CD4-positive, alpha-beta T cell (primary cell): ENCODE measurements at regions of chr1 and their contacts with region 1.

Region 1: GRCh38 chr1:53945433-53946251 is at the start of gene IFT25:
- DNase-seq: peak; percentile 96 to 100 (median 98)
- ATAC-seq: peak; percentile 77
- H3K4me3 ChIP-seq: peak within 1 kb of the TSS; percentile 89
- H3K4me3 Mint-ChIP-seq: peak within 1 kb of the TSS; percentile 99
- H3K27ac ChIP-seq: peak within 1 kb of the TSS; percentile 60 to 80
- H3K27ac Mint-ChIP-seq: peak within 1 kb of the TSS; percentile 91
- H3K4me1 ChIP-seq: peaks cover 28% of the 10 kb centered on the region
- H3K4me1 Mint-ChIP-seq: peaks cover 59% of the 10 kb centered on the region
- H3K27me3 ChIP-seq: no peaks in the 10 kb centered on the region
- H3K27me3 Mint-ChIP-seq: no peaks in the 10 kb centered on the region
- CTCF ChIP-seq: no peak
- total RNA-seq, gene IFT25: 12.7 to 13.9 TPM

Region 2: GRCh38 chr1:52056163-52056936 is 1889.3 kb before region 1 on chr1 and contains the start of gene BTF3L4:
- CTCF ChIA-PET with region 1: no interaction called
- POLR2A ChIA-PET with region 1: interaction called, 3 read pairs
- intact Hi-C with region 1: loop called in 1 of 2 experiments (anchors 10 kb)
- DNase-seq: peak; percentile 85 to 95 (median 90)
- ATAC-seq: peak; percentile 96
- H3K4me3 ChIP-seq: peak within 1 kb of the TSS; percentile 88
- H3K4me3 Mint-ChIP-seq: peak within 1 kb of the TSS; percentile 97
- H3K27ac ChIP-seq: peak within 1 kb of the TSS; percentile 83 to 84
- H3K27ac Mint-ChIP-seq: peak within 1 kb of the TSS; percentile 92
- H3K4me1 ChIP-seq: peaks cover 26% of the 10 kb centered on the region
- H3K4me1 Mint-ChIP-seq: peaks cover 71% of the 10 kb centered on the region
- H3K27me3 ChIP-seq: no peaks in the 10 kb centered on the region
- H3K27me3 Mint-ChIP-seq: no peaks in the 10 kb centered on the region
- CTCF ChIP-seq: no peak
- total RNA-seq, gene BTF3L4: 29.4 to 34.1 TPM

Region 3: DNA sequence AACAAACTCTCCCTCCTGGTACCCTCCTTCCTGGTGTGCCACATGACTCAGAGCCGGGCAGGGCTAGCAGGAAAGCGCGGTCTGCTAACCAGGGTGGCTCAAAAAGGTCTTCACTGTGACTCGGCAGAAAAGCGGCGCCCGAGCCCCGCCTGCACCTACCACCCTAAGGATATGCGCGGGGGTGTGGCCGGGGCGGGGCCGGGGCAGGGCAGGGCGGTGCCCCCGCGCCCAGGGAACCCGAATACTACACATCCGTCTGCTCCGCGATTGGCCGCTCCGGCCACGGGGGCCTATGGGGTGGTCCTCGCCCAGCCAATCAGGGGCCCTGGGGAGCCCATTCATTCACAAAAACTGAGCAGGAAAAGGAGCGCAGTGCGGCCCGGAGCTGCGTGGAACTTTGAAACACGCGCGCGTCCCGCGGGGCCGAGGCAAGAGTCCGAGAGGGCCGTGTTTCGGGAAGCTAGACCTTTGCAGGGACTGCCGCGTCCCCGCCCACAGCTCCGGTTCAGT is 619.5 kb before region 1 on chr1:
- CTCF ChIA-PET with region 1: no interaction called
- POLR2A ChIA-PET with region 1: no interaction called
- intact Hi-C with region 1: loop called in 1 of 2 experiments (anchors 5 kb)
- DNase-seq: peak; percentile 69 to 94 (median 87)
- ATAC-seq: peak; percentile 78
- H3K4me3 ChIP-seq: peak overlapping the region; percentile 86
- H3K4me3 Mint-ChIP-seq: peak overlapping the region; percentile 83
- H3K27ac ChIP-seq: peak overlapping the region in 1 of 2 donors; percentile 65
- H3K27ac Mint-ChIP-seq: peak overlapping the region; percentile 79
- H3K4me1 ChIP-seq: peaks cover 26% of the 10 kb centered on the region
- H3K4me1 Mint-ChIP-seq: peaks cover 17% of the 10 kb centered on the region
- H3K27me3 ChIP-seq: no peaks in the 10 kb centered on the region
- H3K27me3 Mint-ChIP-seq: no peaks in the 10 kb centered on the region
- CTCF ChIP-seq: no peak

Region 4: GRCh38 chr1:53837924-53838652 is 107.6 kb before region 1 on chr1 and contains the start of gene NDC1:
- CTCF ChIA-PET with region 1: interaction called, 4 read pairs
- POLR2A ChIA-PET with region 1: interaction called, 27 read pairs
- intact Hi-C with region 1: loop called (anchors 1 kb)
- DNase-seq: peak; percentile 79 to 96 (median 86)
- ATAC-seq: peak; percentile 89
- H3K4me3 ChIP-seq: peak within 1 kb of the TSS; percentile 73
- H3K4me3 Mint-ChIP-seq: peak within 1 kb of the TSS; percentile 95
- H3K27ac ChIP-seq: peak within 1 kb of the TSS; percentile 95 to 98
- H3K27ac Mint-ChIP-seq: peak within 1 kb of the TSS; percentile 95
- H3K4me1 ChIP-seq: peaks cover 13% of the 10 kb centered on the region
- H3K4me1 Mint-ChIP-seq: peaks cover 37% of the 10 kb centered on the region
- H3K27me3 ChIP-seq: peaks cover 0 to 5% of the 10 kb centered on the region in 2 experiments
- H3K27me3 Mint-ChIP-seq: no peaks in the 10 kb centered on the region
- CTCF ChIP-seq: no peak
- total RNA-seq, gene NDC1: 5.4 to 8.1 TPM

Region 5: DNA sequence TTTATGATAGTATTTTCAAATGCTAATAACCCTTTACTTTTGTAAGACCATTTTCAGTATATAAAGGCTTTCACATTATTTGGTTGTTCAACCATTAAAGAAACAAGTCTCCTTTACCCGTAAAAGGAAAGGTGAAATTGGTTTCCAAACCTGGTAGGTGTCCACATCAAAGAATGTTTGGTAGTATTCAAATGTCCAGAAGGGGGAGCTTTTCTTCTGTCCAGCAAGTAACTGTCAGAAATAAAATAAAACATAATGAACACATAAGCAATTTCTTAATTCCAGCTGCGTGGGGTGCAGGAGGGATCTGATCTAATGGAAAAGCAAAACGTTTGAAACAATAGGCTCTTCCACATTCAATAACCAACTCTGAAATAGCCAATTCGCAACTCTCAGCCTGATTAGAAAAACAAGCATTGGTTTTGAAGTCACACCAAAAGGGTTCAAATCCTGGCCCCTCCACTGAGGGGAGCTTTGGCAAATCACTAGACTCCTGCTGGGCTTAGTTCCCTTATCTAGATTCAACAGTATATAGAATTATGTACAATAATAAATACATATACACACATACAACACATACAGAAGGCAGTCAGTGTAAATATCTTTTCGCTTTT is 67.0 kb before region 1 on chr1:
- CTCF ChIA-PET with region 1: interaction called, 4 read pairs
- POLR2A ChIA-PET with region 1: interaction called, 4 read pairs
- intact Hi-C with region 1: loop called in 1 of 2 experiments (anchors 2 kb)
- DNase-seq: peak in 3 of 14 experiments; percentile 37 to 53 (median 52)
- ATAC-seq: no peak
- H3K4me3 ChIP-seq: no peak overlapping the region
- H3K4me3 Mint-ChIP-seq: no peak overlapping the region
- H3K27ac ChIP-seq: no peak overlapping the region
- H3K27ac Mint-ChIP-seq: no peak overlapping the region
- H3K4me1 ChIP-seq: no peaks in the 10 kb centered on the region
- H3K4me1 Mint-ChIP-seq: peaks cover 12% of the 10 kb centered on the region
- H3K27me3 ChIP-seq: no peaks in the 10 kb centered on the region
- H3K27me3 Mint-ChIP-seq: no peaks in the 10 kb centered on the region
- CTCF ChIP-seq: peak; percentile 63

Region 6: GRCh38 chr1:53959664-53960250 is 14.1 kb after region 1 on chr1:
- CTCF ChIA-PET with region 1: interaction called, 22 read pairs
- POLR2A ChIA-PET with region 1: interaction called, 13 read pairs
- intact Hi-C with region 1: no loop called
- DNase-seq: peak in 4 of 14 experiments; percentile 11 to 72 (median 65)
- ATAC-seq: peak; percentile 86
- H3K4me3 ChIP-seq: no peak overlapping the region
- H3K4me3 Mint-ChIP-seq: no peak overlapping the region
- H3K27ac ChIP-seq: no peak overlapping the region
- H3K27ac Mint-ChIP-seq: no peak overlapping the region
- H3K4me1 ChIP-seq: no peaks in the 10 kb centered on the region
- H3K4me1 Mint-ChIP-seq: peaks cover 4% of the 10 kb centered on the region
- H3K27me3 ChIP-seq: no peaks in the 10 kb centered on the region
- H3K27me3 Mint-ChIP-seq: no peaks in the 10 kb centered on the region
- CTCF ChIP-seq: peak; percentile 72

Region 7: DNA sequence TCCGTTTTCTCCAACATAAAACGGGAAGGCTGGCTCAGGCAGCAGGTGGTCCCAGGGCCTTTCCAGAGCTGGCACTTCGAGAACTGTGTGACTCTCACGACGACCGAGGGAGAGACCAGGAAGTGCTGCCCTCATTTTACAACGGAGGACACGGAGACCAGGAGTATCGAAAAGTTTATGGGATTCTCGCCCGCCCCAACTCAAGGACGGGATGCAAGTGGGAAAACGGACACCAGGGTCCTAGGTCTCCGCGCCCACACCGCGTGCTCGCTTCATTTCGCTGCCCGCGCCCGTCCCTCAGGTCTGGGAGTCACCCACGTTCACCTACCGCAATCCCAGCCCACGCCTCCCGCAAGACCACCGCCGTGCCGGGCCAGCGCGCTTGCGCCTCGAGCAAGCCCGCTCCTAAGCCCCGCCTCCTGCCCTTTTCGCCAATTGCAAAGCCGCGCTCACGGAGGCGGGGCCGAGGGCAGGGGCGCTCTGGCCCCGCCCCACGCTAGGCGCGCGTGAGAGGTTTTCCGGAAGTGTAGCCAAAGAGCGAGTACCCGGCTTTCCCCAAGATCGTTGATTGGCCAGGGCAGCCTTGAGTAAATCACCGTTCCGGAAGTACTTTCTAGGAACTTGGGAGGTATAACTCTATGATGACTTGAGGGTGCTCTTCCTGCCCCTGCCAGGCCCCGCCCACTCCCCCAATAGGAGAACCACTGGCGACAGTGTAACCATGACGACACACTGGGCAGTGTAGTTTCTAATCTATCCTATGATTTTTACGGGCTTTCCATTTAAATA is 818.7 kb after region 1 on chr1 and contains the start of gene PARS2:
- CTCF ChIA-PET with region 1: no interaction called
- POLR2A ChIA-PET with region 1: no interaction called
- intact Hi-C with region 1: loop called in 1 of 2 experiments (anchors 5 kb)
- DNase-seq: peak; percentile 88 to 99 (median 94)
- ATAC-seq: peak; percentile 96
- H3K4me3 ChIP-seq: peak within 1 kb of the TSS; percentile 98
- H3K4me3 Mint-ChIP-seq: peak within 1 kb of the TSS; percentile 98
- H3K27ac ChIP-seq: peak within 1 kb of the TSS in 1 of 2 donors; percentile 71
- H3K27ac Mint-ChIP-seq: peak within 1 kb of the TSS; percentile 70
- H3K4me1 ChIP-seq: peaks cover 8% of the 10 kb centered on the region
- H3K4me1 Mint-ChIP-seq: peaks cover 26% of the 10 kb centered on the region
- H3K27me3 ChIP-seq: no peaks in the 10 kb centered on the region
- H3K27me3 Mint-ChIP-seq: no peaks in the 10 kb centered on the region
- CTCF ChIP-seq: no peak
- total RNA-seq, gene PARS2: not detected

Region 8: GRCh38 chr1:54774820-54775498 is 829.3 kb after region 1 on chr1:
- CTCF ChIA-PET with region 1: no interaction called
- POLR2A ChIA-PET with region 1: no interaction called
- intact Hi-C with region 1: no loop called
- DNase-seq: no peak
- ATAC-seq: no peak
- H3K4me3 ChIP-seq: no peak overlapping the region
- H3K4me3 Mint-ChIP-seq: no peak overlapping the region
- H3K27ac ChIP-seq: no peak overlapping the region
- H3K27ac Mint-ChIP-seq: no peak overlapping the region
- H3K4me1 ChIP-seq: no peaks in the 10 kb centered on the region
- H3K4me1 Mint-ChIP-seq: no peaks in the 10 kb centered on the region
- H3K27me3 ChIP-seq: no peaks in the 10 kb centered on the region
- H3K27me3 Mint-ChIP-seq: no peaks in the 10 kb centered on the region
- CTCF ChIP-seq: no peak